ENCODE measurements at regions of chr20 and their contacts with region 1.

Region 1: GRCh38 chr20:57089691-57090150 is 176.7 kb downstream of the BMP7 start:
- DNase-seq: peak; percentile 92 to 97
- H3K4me3 ChIP-seq: no peak overlapping the region
- H3K4me3 Mint-ChIP-seq: no peak overlapping the region
- H3K27ac Mint-ChIP-seq: peak overlapping the region; percentile 1
- H3K4me1 ChIP-seq: peaks cover 7% of the 10 kb centered on the region
- H3K4me1 Mint-ChIP-seq: peaks cover 18% of the 10 kb centered on the region
- H3K27me3 ChIP-seq: no peaks in the 10 kb centered on the region
- H3K27me3 Mint-ChIP-seq: peaks cover 4% of the 10 kb centered on the region
- CTCF ChIP-seq: peak; percentile 100

Region 2: GRCh38 chr20:56829404-56830380 is 260.0 kb before region 1 on chr20:
- CTCF ChIA-PET with region 1: no interaction called
- POLR2A ChIA-PET with region 1: no interaction called
- intact Hi-C with region 1: no loop called
- DNase-seq: peak; percentile 60 to 71
- H3K4me3 ChIP-seq: no peak overlapping the region
- H3K4me3 Mint-ChIP-seq: peak overlapping the region; percentile 38
- H3K27ac Mint-ChIP-seq: peak overlapping the region; percentile 14
- H3K4me1 ChIP-seq: no peaks in the 10 kb centered on the region; the same call in 1 of the 2 replicates
- H3K4me1 Mint-ChIP-seq: peaks cover 25% of the 10 kb centered on the region
- H3K27me3 ChIP-seq: peaks cover 1% of the 10 kb centered on the region; the same call in 1 of the 2 replicates
- H3K27me3 Mint-ChIP-seq: peaks cover 14% of the 10 kb centered on the region
- CTCF ChIP-seq: no peak

Region 3: DNA sequence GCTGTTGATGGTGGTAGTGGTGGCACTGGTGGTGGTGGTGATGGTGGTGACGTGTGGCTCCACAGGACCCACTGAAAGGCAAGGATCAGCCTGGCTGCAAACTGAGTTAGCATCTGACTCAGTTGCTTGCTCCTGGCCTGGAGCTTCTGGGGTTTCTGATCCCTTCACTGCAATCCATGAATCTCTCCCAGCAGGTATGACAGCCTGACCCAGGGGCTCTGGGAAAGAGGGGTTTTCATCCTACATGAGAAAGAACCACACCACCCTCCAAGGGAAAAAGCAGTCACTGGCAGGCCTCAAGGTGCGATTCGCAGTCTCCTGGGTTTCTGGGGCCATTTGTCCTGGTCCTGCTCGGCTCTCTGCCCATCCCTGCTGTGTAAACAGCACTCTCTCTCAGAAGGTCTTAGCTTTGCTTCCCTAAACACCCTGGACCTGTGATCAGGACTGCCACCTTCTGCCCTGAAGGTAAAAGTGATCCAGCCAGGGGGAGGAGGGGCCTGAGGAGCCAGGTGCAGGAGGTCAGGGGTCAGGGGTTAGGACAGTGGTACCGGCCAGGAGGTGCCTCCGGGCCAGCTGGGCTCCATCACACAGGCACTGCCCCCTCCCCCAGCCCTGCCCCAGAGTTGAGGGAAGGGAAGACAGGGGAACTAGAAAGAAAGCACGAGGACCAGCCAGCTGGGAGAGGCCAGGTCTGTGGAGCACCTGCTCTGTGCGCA is 24.7 kb after region 1 on chr20:
- CTCF ChIA-PET with region 1: interaction called, 5 read pairs
- POLR2A ChIA-PET with region 1: no interaction called
- intact Hi-C with region 1: loop called (anchors 1 kb)
- DNase-seq: peak; percentile 60 to 83
- H3K4me3 ChIP-seq: no peak overlapping the region
- H3K4me3 Mint-ChIP-seq: no peak overlapping the region
- H3K27ac Mint-ChIP-seq: no peak overlapping the region
- H3K4me1 ChIP-seq: peaks cover 3% of the 10 kb centered on the region; the same call in 1 of the 2 replicates
- H3K4me1 Mint-ChIP-seq: no peaks in the 10 kb centered on the region
- H3K27me3 ChIP-seq: no peaks in the 10 kb centered on the region
- H3K27me3 Mint-ChIP-seq: no peaks in the 10 kb centered on the region
- CTCF ChIP-seq: peak in 1 of 2 experiments; percentile 47

Region 4: DNA sequence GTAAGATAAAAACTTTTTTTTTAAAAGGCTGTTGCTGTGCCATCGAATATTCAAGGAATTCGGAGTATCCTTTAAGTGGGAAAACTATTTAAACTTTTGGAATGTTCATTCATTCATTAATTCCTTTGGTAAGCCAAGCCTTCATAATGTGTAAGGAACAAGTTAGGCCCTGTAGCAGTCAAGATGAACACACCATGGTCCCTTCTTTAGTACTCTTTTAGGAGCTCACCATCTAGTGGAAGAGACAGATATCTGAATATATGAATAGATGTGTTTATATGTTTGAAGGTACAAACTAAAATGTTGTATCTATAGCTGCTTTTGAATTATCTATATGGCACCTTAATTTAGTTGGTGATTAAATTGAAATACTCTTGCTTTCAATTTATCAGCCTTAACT is 245.7 kb after region 1 on chr20:
- CTCF ChIA-PET with region 1: interaction called, 56 read pairs
- POLR2A ChIA-PET with region 1: no interaction called
- intact Hi-C with region 1: loop called (anchors 1 kb)
- DNase-seq: no peak
- H3K4me3 ChIP-seq: no peak overlapping the region
- H3K4me3 Mint-ChIP-seq: no peak overlapping the region
- H3K27ac Mint-ChIP-seq: no peak overlapping the region
- H3K4me1 ChIP-seq: peaks cover 12% of the 10 kb centered on the region
- H3K4me1 Mint-ChIP-seq: peaks cover 6% of the 10 kb centered on the region
- H3K27me3 ChIP-seq: no peaks in the 10 kb centered on the region
- H3K27me3 Mint-ChIP-seq: no peaks in the 10 kb centered on the region
- CTCF ChIP-seq: peak; percentile 48 to 53

Region 5: DNA sequence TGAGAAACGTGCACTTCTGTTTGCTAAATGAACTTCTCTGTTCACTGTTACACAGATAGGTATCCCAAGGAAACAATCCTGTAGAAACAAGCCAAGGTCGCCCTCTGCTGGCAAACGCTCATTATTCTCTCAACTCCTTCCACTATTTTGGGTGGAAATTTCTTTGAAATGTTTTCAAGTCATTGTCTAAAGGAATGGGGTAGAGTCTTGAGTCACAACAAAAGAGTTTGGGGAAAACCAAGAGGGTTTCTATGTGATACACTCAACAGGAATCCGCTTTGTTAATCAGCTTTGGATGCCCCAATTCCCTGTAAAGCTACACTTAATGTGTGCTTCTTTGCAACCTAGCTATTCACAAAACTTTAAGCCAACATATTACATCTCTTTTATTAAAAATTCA is 256.8 kb after region 1 on chr20:
- CTCF ChIA-PET with region 1: interaction called, 25 read pairs
- POLR2A ChIA-PET with region 1: no interaction called
- intact Hi-C with region 1: loop called (anchors 1 kb)
- DNase-seq: peak; percentile 85 to 90
- H3K4me3 ChIP-seq: no peak overlapping the region
- H3K4me3 Mint-ChIP-seq: no peak overlapping the region
- H3K27ac Mint-ChIP-seq: no peak overlapping the region
- H3K4me1 ChIP-seq: no peaks in the 10 kb centered on the region
- H3K4me1 Mint-ChIP-seq: no peaks in the 10 kb centered on the region
- H3K27me3 ChIP-seq: no peaks in the 10 kb centered on the region
- H3K27me3 Mint-ChIP-seq: no peaks in the 10 kb centered on the region
- CTCF ChIP-seq: peak; percentile 90 to 97

Region 6: GRCh38 chr20:57498425-57499400 is 409.0 kb after region 1 on chr20:
- CTCF ChIA-PET with region 1: no interaction called
- POLR2A ChIA-PET with region 1: no interaction called
- intact Hi-C with region 1: loop called (anchors 1 kb)
- DNase-seq: peak in 1 of 2 experiments; percentile 65
- H3K4me3 ChIP-seq: no peak overlapping the region
- H3K4me3 Mint-ChIP-seq: no peak overlapping the region
- H3K27ac Mint-ChIP-seq: no peak overlapping the region
- H3K4me1 ChIP-seq: peaks cover 6% of the 10 kb centered on the region; the same call in 1 of the 2 replicates
- H3K4me1 Mint-ChIP-seq: peaks cover 19% of the 10 kb centered on the region
- H3K27me3 ChIP-seq: peaks cover 2% of the 10 kb centered on the region
- H3K27me3 Mint-ChIP-seq: peaks cover 17% of the 10 kb centered on the region
- CTCF ChIP-seq: peak; percentile 43 to 73